Heart left ventricle (tissue), 16 donors: ENCODE measurements at regions of chr20 and their contacts with region 1.

Region 1: DNA sequence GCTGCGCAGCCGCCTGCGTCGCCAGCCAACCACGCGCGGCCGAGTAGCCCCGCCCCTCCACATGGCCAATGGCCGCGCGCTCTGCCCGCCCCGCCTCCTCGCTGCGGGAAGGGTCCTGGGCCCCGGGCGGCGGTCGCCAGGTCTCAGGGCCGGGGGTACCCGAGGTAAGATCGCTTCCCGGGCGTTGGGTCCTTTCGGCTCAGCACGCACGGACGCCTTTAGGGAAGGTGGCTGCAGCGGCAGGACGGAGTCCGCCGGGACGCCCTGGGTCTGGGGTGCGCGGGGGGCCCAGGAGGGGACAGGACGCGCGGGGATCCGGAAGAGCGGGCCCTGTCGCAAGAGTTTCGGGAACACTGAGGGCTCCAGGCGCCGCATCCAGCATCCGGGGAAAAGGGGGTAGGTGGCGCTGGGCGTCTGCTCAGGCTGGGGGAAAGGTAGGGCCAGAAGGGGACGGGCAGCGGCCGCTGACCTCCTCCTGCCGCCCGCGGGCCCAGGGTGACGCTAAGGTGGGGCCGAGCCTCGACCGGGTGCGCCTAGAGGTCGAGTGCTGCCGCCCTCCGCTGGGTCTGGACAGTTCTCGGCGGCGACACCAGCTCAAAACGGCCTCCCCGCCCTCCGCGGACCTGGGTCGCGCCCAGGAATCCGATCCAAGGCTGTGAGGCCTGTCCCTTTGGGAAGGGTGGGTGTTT is at the start of gene MAVS:
- DNase-seq: peak; percentile 92 to 96 (median 93)
- ATAC-seq: peak; percentile 97 to 98 (median 98)
- H3K4me3 ChIP-seq: peak within 1 kb of the TSS; percentile 71 to 99 (median 90)
- H3K27ac ChIP-seq: peak within 1 kb of the TSS; percentile 92 to 98 (median 95)
- H3K4me1 ChIP-seq: peaks cover 0 to 39% (median 18%) of the 10 kb centered on the region in 12 donors
- H3K27me3 ChIP-seq: no peaks in the 10 kb centered on the region
- CTCF ChIP-seq: peak in 1 of 12 donors; percentile 25
- POLR2A ChIP-seq: peak; percentile 63 to 93
- total RNA-seq, gene MAVS: 32.5 to 74.0 (median 43.3) TPM

Region 2: GRCh38 chr20:3595541-3595940 is 251.3 kb before region 1 on chr20:
- intact Hi-C with region 1: no loop called
- DNase-seq: no peak
- ATAC-seq: no peak
- H3K4me3 ChIP-seq: no peak overlapping the region
- H3K27ac ChIP-seq: no peak overlapping the region
- H3K4me1 ChIP-seq: no peaks in the 10 kb centered on the region
- H3K27me3 ChIP-seq: no peaks in the 10 kb centered on the region
- CTCF ChIP-seq: no peak
- POLR2A ChIP-seq: no peak

Region 3: GRCh38 chr20:3716195-3716834 is 130.6 kb before region 1 on chr20:
- intact Hi-C with region 1: loop called in 1 of 10 experiments (anchors 5 kb)
- DNase-seq: peak in 4 of 5 donors; percentile 44 to 70 (median 52)
- ATAC-seq: peak; percentile 59 to 74 (median 67)
- H3K4me3 ChIP-seq: no peak overlapping the region
- H3K27ac ChIP-seq: no peak overlapping the region
- H3K4me1 ChIP-seq: peaks cover 0 to 24% (median 0%) of the 10 kb centered on the region in 12 donors
- H3K27me3 ChIP-seq: peaks cover 0 to 4% (median 0%) of the 10 kb centered on the region in 9 donors
- CTCF ChIP-seq: peak; percentile 54 to 84 (median 74)
- POLR2A ChIP-seq: no peak

Region 4: DNA sequence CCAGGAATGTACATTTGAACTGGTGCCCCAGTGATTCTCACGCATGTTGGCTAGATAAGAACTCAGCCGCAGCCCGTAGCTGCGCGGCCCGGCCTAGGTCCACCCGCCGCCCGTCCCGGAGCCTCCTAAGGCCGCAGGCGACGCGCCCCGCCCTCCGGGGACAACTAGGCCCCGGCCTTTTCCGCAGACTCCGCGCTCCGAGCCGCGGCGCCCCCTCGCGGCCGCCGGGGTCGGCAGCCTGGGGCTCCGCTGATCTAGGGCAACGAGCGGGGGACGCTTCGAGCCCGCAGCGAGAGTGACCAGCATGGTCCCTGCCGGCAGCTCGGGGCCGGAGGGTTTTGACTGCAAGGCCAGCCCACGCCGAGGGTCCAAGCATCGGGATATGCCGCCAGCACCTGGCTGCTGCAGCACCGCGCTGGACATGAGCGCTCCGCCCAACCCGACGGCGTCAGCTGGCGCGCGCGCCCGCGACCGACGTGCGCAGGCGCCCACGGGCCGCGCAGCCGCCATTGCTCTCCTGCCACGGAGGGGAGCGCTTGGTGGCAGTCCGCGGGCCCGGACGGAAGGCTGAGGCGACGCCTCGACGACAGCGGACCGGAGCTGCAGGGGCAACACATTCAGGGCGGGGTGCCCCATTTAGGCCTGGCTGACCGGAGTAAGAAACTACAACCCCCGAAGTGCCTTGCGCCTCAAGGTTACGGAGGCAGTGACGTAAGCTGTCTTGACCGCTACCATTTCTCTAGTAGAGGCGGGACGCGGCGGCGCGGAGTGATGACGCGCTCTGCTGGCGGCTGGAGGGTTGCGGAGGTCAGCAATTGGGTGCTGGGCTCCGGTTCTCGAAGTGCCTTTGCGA is 26.6 kb before region 1 on chr20 and contains the start of gene AP5S1:
- intact Hi-C with region 1: loop called in 2 of 10 experiments (anchors 2 kb)
- DNase-seq: peak; percentile 97 to 98 (median 98)
- ATAC-seq: peak; percentile 80 to 94 (median 92)
- H3K4me3 ChIP-seq: peak within 1 kb of the TSS; percentile 48 to 95 (median 67)
- H3K27ac ChIP-seq: peak within 1 kb of the TSS; percentile 93 to 99 (median 98)
- H3K4me1 ChIP-seq: peaks cover 3 to 42% (median 23%) of the 10 kb centered on the region in 12 donors
- H3K27me3 ChIP-seq: no peaks in the 10 kb centered on the region
- CTCF ChIP-seq: peak; percentile 94 to 100 (median 100)
- POLR2A ChIP-seq: peak in 1 of 2 donors; percentile 61
- total RNA-seq, gene AP5S1: 10.5 to 18.6 (median 12.0) TPM

Region 5: GRCh38 chr20:3826420-3826819 is 20.5 kb before region 1 on chr20:
- intact Hi-C with region 1: loop called in 3 of 10 experiments (anchors 2 kb)
- DNase-seq: no peak
- ATAC-seq: no peak
- H3K4me3 ChIP-seq: no peak overlapping the region
- H3K27ac ChIP-seq: no peak overlapping the region
- H3K4me1 ChIP-seq: peaks cover 0 to 15% (median 5%) of the 10 kb centered on the region in 12 donors
- H3K27me3 ChIP-seq: no peaks in the 10 kb centered on the region
- CTCF ChIP-seq: no peak
- POLR2A ChIP-seq: no peak